ENCODE measurements at regions of chr18 and their contacts with region 1.

Region 1: DNA sequence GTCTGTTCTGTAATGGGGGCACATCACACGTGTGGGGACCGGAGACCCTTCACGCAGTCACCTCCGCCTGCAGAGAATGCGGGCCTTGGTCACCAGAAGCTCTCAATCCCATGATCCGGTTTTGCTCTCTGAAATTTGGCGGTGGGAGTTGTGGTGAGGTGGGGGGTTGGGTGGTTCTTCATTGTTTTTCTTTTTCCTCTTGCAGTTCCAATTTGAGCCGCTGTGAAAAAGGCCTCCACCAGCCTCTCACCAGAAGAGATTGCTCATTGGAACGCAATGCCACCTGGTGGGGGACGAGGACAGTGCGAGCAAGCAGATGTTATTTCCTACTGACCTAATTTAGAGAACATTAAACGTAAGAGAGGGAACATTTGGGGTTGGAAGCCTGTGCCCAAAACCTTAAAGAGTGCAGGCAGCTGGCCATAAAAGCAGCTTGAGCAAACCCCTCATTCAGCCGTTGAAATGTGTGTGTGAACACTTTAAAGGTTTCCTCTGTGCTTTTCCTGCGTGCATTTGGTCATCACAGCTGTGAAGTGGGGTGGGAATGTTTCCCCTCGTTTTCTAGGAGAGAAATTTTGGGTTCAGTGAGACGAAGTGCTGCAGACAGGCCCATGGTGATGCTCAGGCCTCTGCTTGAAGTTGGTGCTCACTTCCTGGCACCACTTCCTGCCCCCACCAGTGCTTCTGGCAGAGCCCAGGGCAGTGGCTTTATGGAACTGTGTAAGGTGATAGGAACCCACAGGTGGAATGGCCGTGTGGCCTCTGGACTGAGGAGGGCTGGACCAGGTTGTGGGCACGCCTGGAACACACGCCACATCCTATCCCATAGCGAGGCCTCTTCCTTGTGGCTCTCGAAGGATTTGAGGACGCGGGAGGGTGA is 61.7 kb downstream of the ZCCHC2 start:
- DNase-seq: peak; percentile 88
- ATAC-seq: peak; percentile 93
- H3K4me3 ChIP-seq: no peak overlapping the region
- H3K27ac ChIP-seq: no peak overlapping the region
- H3K4me1 ChIP-seq: peaks cover 1% of the 10 kb centered on the region; the same call in 1 of the 2 replicates
- H3K27me3 ChIP-seq: peaks cover 3% of the 10 kb centered on the region; the same call in 1 of the 2 replicates
- CTCF ChIP-seq: peak; percentile 99
- POLR2A ChIP-seq: no peak
- RAD21 ChIP-seq: peak; percentile 91

Region 2: GRCh38 chr18:62982600-62983251 is 398.2 kb after region 1 on chr18:
- CTCF ChIA-PET with region 1: interaction called, 13 read pairs
- POLR2A ChIA-PET with region 1: no interaction called
- dilution Hi-C with region 1: no loop called
- in situ Hi-C with region 1: loop called (anchors 5 kb)
- intact Hi-C with region 1: loop called (anchors 1 kb)
- DNase-seq: peak; percentile 63
- ATAC-seq: peak; percentile 63
- H3K4me3 ChIP-seq: no peak overlapping the region
- H3K27ac ChIP-seq: no peak overlapping the region
- H3K4me1 ChIP-seq: peaks cover 3% of the 10 kb centered on the region
- H3K27me3 ChIP-seq: peaks cover 6% of the 10 kb centered on the region
- CTCF ChIP-seq: peak; percentile 90
- POLR2A ChIP-seq: no peak
- RAD21 ChIP-seq: peak; percentile 92

Region 3: DNA sequence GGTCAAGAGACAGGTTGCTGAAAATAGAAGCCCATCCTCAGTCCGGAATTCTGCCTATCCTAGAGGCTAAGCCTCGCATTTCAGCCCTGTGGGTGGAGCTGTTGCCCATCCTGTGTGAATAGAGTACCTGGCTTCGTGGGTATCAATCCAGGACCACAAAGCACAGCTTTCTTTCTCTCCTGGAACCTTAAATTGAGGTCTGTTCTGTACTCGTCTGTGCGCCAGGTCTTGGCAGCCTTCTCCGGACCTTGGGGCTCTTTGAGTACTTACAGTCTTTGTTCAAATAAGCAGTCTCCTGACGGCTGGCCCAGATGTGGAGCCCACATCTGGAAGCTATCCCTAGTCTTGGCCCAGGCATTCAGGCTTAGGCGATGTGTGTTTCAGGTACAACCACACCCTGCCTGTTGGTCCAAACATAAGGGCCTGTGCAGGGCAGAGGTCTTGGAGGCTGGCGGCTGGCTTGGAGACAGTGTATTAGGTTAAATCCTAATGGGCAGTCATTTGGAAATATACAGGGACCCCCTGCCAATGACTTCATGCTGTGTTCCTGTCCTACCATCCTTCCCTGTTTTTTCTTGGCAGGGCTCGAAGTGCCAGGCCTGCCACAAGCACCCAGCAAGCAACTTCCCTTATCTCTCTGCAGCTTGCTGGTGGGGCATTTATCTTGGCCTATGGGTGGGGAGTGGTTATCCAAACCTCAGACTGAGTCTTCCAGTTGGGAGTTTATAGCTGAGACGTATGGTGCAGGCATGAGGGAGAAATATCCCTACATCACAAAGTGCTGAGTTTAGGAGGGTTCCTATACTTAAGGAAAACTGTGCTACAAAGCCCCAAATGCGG is 441.0 kb after region 1 on chr18:
- CTCF ChIA-PET with region 1: no interaction called
- POLR2A ChIA-PET with region 1: no interaction called
- dilution Hi-C with region 1: no loop called
- in situ Hi-C with region 1: no loop called
- intact Hi-C with region 1: no loop called
- DNase-seq: no peak
- ATAC-seq: no peak
- H3K4me3 ChIP-seq: no peak overlapping the region
- H3K27ac ChIP-seq: no peak overlapping the region
- H3K4me1 ChIP-seq: no peaks in the 10 kb centered on the region
- H3K27me3 ChIP-seq: peaks cover 11% of the 10 kb centered on the region
- CTCF ChIP-seq: 0 out of 2 replicates have a peak, but pooled peaks have one; percentile 10
- POLR2A ChIP-seq: no peak
- RAD21 ChIP-seq: no peak

Region 4: DNA sequence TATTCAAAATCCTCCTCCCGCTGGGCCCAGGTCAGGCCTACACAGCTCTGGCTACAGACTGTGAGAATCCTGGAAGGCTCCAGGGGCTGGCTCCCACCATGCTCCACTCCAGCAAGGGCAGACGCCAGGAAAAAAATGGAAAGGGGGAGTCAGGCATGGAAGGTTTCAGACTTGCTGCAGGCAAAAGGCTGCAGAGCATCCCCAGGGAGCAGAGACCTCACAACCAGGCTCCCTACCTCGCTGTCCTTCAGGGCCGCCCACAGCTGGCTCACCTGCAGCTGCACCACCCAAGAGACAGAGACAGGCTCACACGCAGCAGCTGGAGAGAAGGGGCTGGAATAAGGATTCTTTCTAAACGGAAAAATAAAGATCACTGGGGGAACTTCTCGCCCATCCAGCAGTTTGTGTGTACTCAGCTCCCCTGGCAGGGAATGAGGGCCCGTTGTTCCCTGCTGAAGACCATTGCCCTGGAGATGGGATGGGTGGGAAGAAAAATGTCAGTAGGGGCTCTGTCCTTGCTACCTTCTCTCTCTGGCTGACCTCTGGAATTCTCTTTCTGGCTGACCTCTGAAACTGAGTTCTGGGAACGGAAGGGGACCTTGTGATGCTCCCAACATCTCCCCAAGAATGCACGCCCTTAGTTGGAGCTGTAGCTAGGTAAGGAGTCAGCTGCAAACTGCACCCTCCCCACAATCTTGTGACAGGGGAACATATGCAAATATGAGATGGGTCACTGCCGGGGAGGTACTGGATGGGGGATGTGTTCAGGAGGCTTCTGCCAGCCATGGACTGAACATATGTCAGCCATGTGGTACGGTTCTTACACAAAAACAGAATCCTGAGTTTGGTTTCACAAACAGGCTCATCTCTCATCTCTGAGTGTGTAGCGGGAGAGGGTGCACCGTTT is 700.6 kb after region 1 on chr18:
- CTCF ChIA-PET with region 1: no interaction called
- POLR2A ChIA-PET with region 1: no interaction called
- dilution Hi-C with region 1: no loop called
- in situ Hi-C with region 1: no loop called
- intact Hi-C with region 1: no loop called
- DNase-seq: no peak
- ATAC-seq: no peak
- H3K4me3 ChIP-seq: no peak overlapping the region
- H3K27ac ChIP-seq: no peak overlapping the region
- H3K4me1 ChIP-seq: no peaks in the 10 kb centered on the region
- H3K27me3 ChIP-seq: peaks cover 1% of the 10 kb centered on the region
- CTCF ChIP-seq: no peak
- POLR2A ChIP-seq: no peak
- RAD21 ChIP-seq: no peak